Sciatic nerve (tissue), 2 donors: ENCODE measurements at regions of chr9 and their contacts with region 1.

Region 1: GRCh38 chr9:37126214-37126788 is 5.9 kb downstream of the ZCCHC7 start:
- DNase-seq: no peak
- ATAC-seq: no peak

Region 2: DNA sequence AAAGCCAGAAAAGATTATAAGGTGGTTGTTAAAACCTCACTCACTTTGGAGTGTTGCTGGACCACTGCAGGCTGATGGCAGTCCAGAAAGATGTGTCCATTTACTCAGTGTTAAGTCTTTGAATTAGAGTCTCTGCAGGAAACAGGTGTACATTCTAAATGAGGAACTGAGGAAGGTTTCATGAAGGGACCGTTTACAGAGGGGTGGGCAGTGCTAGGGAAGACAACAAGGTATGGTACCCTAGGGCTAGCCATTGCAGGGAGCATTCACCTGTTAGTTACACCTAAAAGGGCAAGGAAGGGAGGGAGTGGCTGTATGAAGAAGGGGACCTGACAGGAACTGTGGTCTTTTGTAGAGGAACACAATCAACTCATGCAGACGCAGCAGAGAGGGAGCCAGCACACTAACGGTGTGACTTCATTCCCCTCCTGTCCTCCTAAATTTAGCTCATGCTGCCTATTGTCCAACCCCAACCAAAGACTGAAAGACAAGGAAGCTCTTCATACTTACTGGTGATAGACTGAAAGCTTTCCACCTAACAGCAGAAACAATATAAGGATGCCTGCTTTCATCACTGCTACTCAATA is 60.1 kb before region 1 on chr9:
- intact Hi-C with region 1: no loop called
- DNase-seq: no peak
- ATAC-seq: no peak

Region 3: GRCh38 chr9:37404590-37404989 is 278.3 kb after region 1 on chr9:
- intact Hi-C with region 1: loop called (anchors 5 kb)
- DNase-seq: no peak
- ATAC-seq: no peak